ENCODE measurements at regions of chr3 and their contacts with region 1.

Region 1: GRCh38 chr3:33787328-33788009 is 11.0 kb upstream of the PDCD6IP start:
- DNase-seq: peak; percentile 26
- H3K4me3 ChIP-seq: peak overlapping the region; percentile 56
- H3K27ac ChIP-seq: no peak overlapping the region
- H3K4me1 ChIP-seq: peaks cover 5% of the 10 kb centered on the region
- H3K27me3 ChIP-seq: no peaks in the 10 kb centered on the region
- CTCF ChIP-seq: peak; percentile 88

Region 2: GRCh38 chr3:33612607-33613006 is 174.9 kb before region 1 on chr3:
- intact Hi-C with region 1: no loop called
- DNase-seq: no peak
- H3K4me3 ChIP-seq: no peak overlapping the region
- H3K27ac ChIP-seq: no peak overlapping the region
- H3K4me1 ChIP-seq: no peaks in the 10 kb centered on the region
- H3K27me3 ChIP-seq: no peaks in the 10 kb centered on the region
- CTCF ChIP-seq: no peak

Region 3: DNA sequence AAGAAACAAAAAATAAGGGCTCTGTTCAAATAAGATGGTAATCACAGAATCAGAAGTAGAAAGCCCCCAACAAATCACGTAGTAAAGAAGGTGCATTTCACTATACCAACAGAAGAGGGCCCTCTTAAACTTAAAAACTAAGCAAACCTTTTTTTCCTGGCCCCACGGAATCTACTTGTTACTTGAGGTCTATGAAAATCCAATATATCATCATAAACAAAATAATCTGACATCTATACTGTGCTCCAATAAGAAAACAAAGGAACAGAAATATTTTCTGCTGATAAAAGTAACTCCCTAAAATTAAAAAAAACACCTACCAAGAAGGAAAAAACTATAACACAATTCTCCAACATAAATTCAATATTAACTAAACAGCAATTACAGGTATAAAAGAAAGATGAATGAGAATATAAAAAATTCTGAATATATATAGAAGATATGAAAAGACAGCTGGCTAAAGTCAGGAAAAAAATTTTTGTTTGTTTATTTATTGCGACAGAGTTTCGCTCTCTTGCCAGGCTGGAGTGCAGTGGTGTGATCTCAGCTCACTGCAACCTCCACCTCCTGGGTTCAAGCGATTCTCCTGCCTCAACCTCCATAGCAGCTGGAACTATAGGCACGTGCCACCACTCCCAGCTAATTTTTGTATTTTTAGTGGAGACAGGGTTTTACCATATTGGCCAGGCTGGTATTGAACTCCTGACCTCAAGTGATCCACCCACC is 151.2 kb before region 1 on chr3:
- intact Hi-C with region 1: loop called (anchors 5 kb)
- DNase-seq: no peak
- H3K4me3 ChIP-seq: no peak overlapping the region
- H3K27ac ChIP-seq: no peak overlapping the region
- H3K4me1 ChIP-seq: peaks cover 10% of the 10 kb centered on the region
- H3K27me3 ChIP-seq: no peaks in the 10 kb centered on the region
- CTCF ChIP-seq: peak; percentile 72

Region 4: GRCh38 chr3:33664195-33664594 is 123.3 kb before region 1 on chr3:
- intact Hi-C with region 1: no loop called
- DNase-seq: no peak
- H3K4me3 ChIP-seq: no peak overlapping the region
- H3K27ac ChIP-seq: no peak overlapping the region
- H3K4me1 ChIP-seq: peaks cover 15% of the 10 kb centered on the region
- H3K27me3 ChIP-seq: no peaks in the 10 kb centered on the region
- CTCF ChIP-seq: no peak

Region 5: DNA sequence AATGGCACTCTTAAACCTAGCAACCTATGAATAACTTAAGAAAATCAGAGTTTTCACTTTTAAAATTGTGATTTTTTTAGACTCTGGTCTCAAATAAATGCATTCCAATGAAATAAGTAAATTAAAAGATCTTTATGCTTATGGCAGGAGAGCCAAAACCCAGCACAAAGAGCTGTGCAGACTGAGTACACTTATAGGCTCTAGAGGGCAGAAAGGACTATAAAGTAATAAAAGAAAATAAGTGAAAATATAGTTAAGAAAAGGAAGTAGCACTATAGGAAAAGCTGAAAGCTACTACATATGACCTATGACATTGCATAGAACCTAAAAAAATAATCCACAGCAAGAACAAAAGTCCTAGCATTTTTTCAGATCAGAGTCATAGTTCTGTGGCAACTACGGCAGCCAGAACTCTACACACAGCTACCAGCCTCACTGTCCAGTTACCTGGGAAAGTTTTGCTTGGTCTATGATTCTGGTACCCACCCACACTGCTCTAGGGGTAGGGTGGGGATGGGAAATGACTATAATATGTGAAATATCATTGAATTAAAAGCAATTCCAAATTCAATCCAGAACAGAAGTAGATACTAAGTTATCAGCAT is 100.0 kb before region 1 on chr3:
- intact Hi-C with region 1: no loop called
- DNase-seq: no peak
- H3K4me3 ChIP-seq: no peak overlapping the region
- H3K27ac ChIP-seq: no peak overlapping the region
- H3K4me1 ChIP-seq: no peaks in the 10 kb centered on the region
- H3K27me3 ChIP-seq: no peaks in the 10 kb centered on the region
- CTCF ChIP-seq: no peak

Measured in left ventricle myocardium inferior (tissue), 1 donor.